ENCODE measurements at regions of chr7 and their contacts with region 1.

Region 1: DNA sequence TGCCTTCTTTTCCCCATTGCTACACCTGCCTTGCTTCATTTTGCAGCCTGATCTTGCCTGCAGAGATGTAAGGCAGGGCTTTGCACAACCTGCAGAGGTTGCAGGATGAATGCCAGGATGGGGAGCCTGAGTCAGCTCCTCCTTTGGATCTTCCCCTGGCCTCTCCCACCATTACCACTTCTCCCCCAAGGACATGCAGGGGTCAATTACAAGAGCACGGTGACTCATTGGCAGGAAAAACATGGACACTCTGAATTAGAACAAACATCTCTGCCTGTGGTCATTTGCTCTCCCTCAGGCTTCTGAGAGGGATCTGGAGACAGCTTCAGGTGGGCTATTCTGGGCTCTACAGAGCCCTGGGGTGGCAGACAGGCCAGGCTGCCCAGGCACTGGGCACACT is 89.2 kb downstream of the HERPUD2 start:
- DNase-seq: no peak
- H3K4me3 ChIP-seq: no peak overlapping the region
- H3K27ac ChIP-seq: no peak overlapping the region
- H3K4me1 ChIP-seq: 0 out of 4 replicates have a peak, but pooled peaks cover 0 to 4% of the 10 kb centered on the region in 2 experiments
- H3K27me3 ChIP-seq: no peaks in the 10 kb centered on the region
- CTCF ChIP-seq: no peak
- EP300 ChIP-seq: no peak
- RAD21 ChIP-seq: no peak

Region 2: DNA sequence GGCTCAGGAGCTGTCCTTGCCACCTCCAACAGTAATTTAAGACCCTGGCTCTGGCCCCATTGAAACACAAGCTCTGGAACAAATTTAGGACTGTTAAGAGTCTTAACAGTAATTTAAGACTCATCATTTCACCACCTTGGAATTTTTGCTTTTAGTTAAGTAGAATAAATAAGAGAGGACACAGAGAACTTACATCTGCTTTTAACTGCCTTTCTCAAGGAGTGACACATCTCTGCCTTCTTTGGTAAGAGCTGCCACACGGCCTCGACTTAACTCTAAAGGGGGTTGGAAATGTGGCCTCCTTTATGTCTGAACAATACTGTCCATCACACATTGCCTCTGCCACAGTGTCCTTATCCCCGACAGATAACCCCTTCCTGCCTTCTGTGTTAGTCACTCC is 11.3 kb after region 1 on chr7:
- CTCF ChIA-PET with region 1: interaction called, 123 read pairs
- POLR2A ChIA-PET with region 1: no interaction called
- DNase-seq: no peak
- H3K4me3 ChIP-seq: no peak overlapping the region
- H3K27ac ChIP-seq: no peak overlapping the region
- H3K4me1 ChIP-seq: no peaks in the 10 kb centered on the region; a peak in 1 of 4 replicates
- H3K27me3 ChIP-seq: no peaks in the 10 kb centered on the region
- CTCF ChIP-seq: no peak
- EP300 ChIP-seq: no peak
- RAD21 ChIP-seq: no peak